Left ventricle myocardium inferior (tissue), 1 donor: ENCODE measurements at regions of chr1 and their contacts with region 1.

Region 1: GRCh38 chr1:167789501-167789900 is 67.7 kb downstream of the MPZL1 start:
- DNase-seq: no peak
- H3K4me3 ChIP-seq: no peak overlapping the region
- H3K27ac ChIP-seq: no peak overlapping the region
- H3K4me1 ChIP-seq: peaks cover 13% of the 10 kb centered on the region
- H3K27me3 ChIP-seq: no peaks in the 10 kb centered on the region
- CTCF ChIP-seq: no peak

Region 2: DNA sequence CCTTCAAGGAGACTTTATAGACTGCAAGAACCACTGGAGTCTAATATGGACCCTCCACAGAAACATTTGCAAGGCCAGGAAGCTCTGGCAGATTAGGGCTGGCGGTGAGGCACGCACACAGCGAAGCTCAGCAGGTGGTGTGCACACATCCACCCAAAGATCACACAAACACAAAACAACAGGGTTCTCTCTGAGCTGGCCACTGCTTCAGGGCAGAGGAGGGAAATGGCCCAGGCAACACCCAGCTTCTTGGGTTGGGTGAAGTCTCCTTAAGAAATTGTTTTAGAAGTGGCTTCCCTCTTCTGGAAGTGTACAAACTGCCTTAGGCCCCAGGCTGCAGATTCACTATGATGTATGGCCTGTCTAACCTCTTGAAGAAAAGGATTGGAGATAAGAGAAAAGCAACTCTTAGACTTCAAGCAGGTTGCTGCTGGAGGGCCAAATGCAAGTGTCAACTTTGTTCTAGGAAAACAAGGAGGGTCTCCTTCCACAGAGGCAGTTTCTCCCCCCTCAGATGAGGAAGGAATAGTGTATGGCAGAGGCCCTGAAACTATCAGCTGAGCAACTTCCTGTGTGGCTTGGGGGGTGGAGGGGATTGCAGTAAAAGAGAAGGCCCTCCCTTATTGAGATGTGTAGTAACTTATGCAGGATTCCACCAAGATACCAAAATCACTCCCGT is 157.4 kb before region 1 on chr1:
- intact Hi-C with region 1: no loop called
- DNase-seq: no peak
- H3K4me3 ChIP-seq: peak overlapping the region; percentile 88
- H3K27ac ChIP-seq: peak overlapping the region; percentile 96
- H3K4me1 ChIP-seq: peaks cover 96% of the 10 kb centered on the region
- H3K27me3 ChIP-seq: no peaks in the 10 kb centered on the region
- CTCF ChIP-seq: no peak

Region 3: GRCh38 chr1:167721617-167722151 is 67.8 kb before region 1 on chr1 and contains the start of gene MPZL1:
- intact Hi-C with region 1: loop called (anchors 10 kb)
- DNase-seq: peak; percentile 97
- H3K4me3 ChIP-seq: peak within 1 kb of the TSS; percentile 96
- H3K27ac ChIP-seq: peak within 1 kb of the TSS; percentile 89
- H3K4me1 ChIP-seq: peaks cover 60% of the 10 kb centered on the region
- H3K27me3 ChIP-seq: no peaks in the 10 kb centered on the region
- CTCF ChIP-seq: no peak
- total RNA-seq, gene MPZL1: 28.9 TPM